H1 (cell line): ENCODE measurements at regions of chr17 and their contacts with region 1.

Region 1: DNA sequence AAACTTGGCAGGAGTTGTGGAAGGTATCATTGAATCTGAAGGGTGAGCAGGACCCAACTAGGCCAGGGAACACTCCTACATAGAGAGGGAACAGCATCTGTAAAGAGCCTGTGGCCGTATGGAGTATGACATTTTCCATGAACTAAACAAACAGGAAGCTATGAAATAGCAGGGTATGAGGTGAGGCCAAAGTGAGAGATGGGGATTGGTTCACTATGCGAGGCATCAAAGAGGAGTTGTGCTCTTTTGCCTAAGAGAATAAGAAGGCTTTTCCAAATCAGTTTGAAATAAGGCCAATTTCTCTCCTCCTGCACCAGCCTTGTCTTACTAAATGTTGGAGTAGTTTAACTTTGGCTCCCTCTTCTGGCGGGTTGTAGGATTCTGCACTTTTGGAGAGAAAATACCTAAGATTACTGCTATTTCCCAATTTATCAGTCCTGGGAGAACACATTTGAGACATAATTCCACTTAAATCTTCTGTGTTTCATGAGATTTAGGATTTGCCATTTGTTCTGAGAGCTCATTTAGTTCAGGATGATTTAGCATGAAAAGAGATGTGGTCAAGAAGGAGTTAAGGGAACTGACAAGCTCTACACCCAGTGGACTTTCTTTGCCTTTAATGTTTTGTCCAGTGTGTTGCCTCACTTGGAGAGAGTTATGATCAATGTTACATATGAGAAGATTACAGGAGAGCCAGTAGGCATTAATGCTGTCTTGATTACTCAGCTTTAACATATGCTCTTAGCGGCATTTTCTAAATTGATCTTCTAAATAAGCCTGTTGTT is 55.4 kb downstream of the TNRC6C start:
- DNase-seq: peak in 1 of 2 experiments; percentile 57
- H3K4me3 ChIP-seq: no peak overlapping the region
- H3K27ac ChIP-seq: no peak overlapping the region
- H3K4me1 ChIP-seq: 0 out of 7 replicates have a peak, but pooled peaks cover 0 to 1% (median 0%) of the 10 kb centered on the region in 4 experiments
- H3K27me3 ChIP-seq: no peaks in the 10 kb centered on the region
- CTCF ChIP-seq: peak in 2 of 3 experiments; percentile 71 to 74; a peak in 3 of 4 replicates
- EP300 ChIP-seq: no peak
- POLR2A ChIP-seq: no peak
- RAD21 ChIP-seq: peak; percentile 86 to 89

Region 2: GRCh38 chr17:77887464-77888241 is 126.2 kb before region 1 on chr17:
- CTCF ChIA-PET with region 1: interaction called, 147 read pairs
- POLR2A ChIA-PET with region 1: no interaction called
- DNase-seq: no peak
- H3K4me3 ChIP-seq: peak overlapping the region; percentile 42 to 63 (median 55); a peak in 7 of 8 replicates
- H3K27ac ChIP-seq: no peak overlapping the region
- H3K4me1 ChIP-seq: peaks cover 0 to 18% (median 12%) of the 10 kb centered on the region in 4 experiments; a peak in 6 of 7 replicates
- H3K27me3 ChIP-seq: peaks cover 7 to 30% (median 22%) of the 10 kb centered on the region in 4 experiments; a peak in 6 of 7 replicates
- CTCF ChIP-seq: no peak
- EP300 ChIP-seq: no peak
- POLR2A ChIP-seq: no peak
- RAD21 ChIP-seq: no peak

Region 3: GRCh38 chr17:77914385-77915254 is 99.3 kb before region 1 on chr17:
- CTCF ChIA-PET with region 1: interaction called, 42 read pairs
- POLR2A ChIA-PET with region 1: no interaction called
- DNase-seq: no peak
- H3K4me3 ChIP-seq: no peak overlapping the region
- H3K27ac ChIP-seq: no peak overlapping the region
- H3K4me1 ChIP-seq: peaks cover 0 to 3% (median 0%) of the 10 kb centered on the region in 4 experiments; a peak in 1 of 7 replicates
- H3K27me3 ChIP-seq: no peaks in the 10 kb centered on the region; a peak in 1 of 7 replicates
- CTCF ChIP-seq: peak; percentile 70 to 80 (median 75)
- EP300 ChIP-seq: no peak
- POLR2A ChIP-seq: no peak
- RAD21 ChIP-seq: peak; percentile 79 to 84

Region 4: DNA sequence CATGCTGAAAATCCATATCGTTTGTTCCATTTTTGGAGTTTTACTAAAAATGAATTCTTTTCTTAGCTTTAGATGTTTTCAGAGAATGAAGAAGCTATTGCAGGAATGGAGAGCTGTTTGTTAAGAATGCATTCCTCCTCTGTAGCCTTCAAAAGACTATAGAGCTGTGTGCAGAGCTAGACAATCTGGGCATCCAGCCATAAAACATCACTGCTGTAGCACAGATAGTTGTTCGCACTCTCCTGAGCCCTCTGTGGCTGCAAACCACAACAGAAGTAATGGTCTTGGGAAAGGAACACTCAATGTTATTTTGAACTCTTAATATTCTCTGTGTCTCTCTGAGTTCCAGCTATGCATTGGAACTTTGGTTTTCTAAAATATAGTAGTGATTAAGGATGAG is 50.4 kb before region 1 on chr17:
- CTCF ChIA-PET with region 1: interaction called, 10 read pairs
- POLR2A ChIA-PET with region 1: interaction called, 9 read pairs
- DNase-seq: no peak
- H3K4me3 ChIP-seq: no peak overlapping the region
- H3K27ac ChIP-seq: no peak overlapping the region
- H3K4me1 ChIP-seq: peaks cover 0 to 3% (median under 1%) of the 10 kb centered on the region in 4 experiments; a peak in 3 of 7 replicates
- H3K27me3 ChIP-seq: peaks cover 0 to 6% (median 2%) of the 10 kb centered on the region in 4 experiments; a peak in 4 of 7 replicates
- CTCF ChIP-seq: no peak
- EP300 ChIP-seq: no peak
- POLR2A ChIP-seq: no peak
- RAD21 ChIP-seq: no peak

Region 5: GRCh38 chr17:77990301-77990700 is 23.6 kb before region 1 on chr17:
- CTCF ChIA-PET with region 1: interaction called, 13 read pairs
- POLR2A ChIA-PET with region 1: no interaction called
- DNase-seq: no peak
- H3K4me3 ChIP-seq: no peak overlapping the region
- H3K27ac ChIP-seq: no peak overlapping the region
- H3K4me1 ChIP-seq: peaks cover 0 to 3% (median 0%) of the 10 kb centered on the region in 4 experiments; a peak in 3 of 7 replicates
- H3K27me3 ChIP-seq: no peaks in the 10 kb centered on the region
- CTCF ChIP-seq: no peak
- EP300 ChIP-seq: no peak
- POLR2A ChIP-seq: no peak
- RAD21 ChIP-seq: no peak

Region 6: GRCh38 chr17:78101112-78101511 is 87.2 kb after region 1 on chr17:
- CTCF ChIA-PET with region 1: no interaction called
- POLR2A ChIA-PET with region 1: no interaction called
- DNase-seq: no peak
- H3K4me3 ChIP-seq: no peak overlapping the region
- H3K27ac ChIP-seq: no peak overlapping the region
- H3K4me1 ChIP-seq: no peaks in the 10 kb centered on the region
- H3K27me3 ChIP-seq: no peaks in the 10 kb centered on the region
- CTCF ChIP-seq: no peak
- EP300 ChIP-seq: no peak
- POLR2A ChIP-seq: no peak
- RAD21 ChIP-seq: no peak

Region 7: DNA sequence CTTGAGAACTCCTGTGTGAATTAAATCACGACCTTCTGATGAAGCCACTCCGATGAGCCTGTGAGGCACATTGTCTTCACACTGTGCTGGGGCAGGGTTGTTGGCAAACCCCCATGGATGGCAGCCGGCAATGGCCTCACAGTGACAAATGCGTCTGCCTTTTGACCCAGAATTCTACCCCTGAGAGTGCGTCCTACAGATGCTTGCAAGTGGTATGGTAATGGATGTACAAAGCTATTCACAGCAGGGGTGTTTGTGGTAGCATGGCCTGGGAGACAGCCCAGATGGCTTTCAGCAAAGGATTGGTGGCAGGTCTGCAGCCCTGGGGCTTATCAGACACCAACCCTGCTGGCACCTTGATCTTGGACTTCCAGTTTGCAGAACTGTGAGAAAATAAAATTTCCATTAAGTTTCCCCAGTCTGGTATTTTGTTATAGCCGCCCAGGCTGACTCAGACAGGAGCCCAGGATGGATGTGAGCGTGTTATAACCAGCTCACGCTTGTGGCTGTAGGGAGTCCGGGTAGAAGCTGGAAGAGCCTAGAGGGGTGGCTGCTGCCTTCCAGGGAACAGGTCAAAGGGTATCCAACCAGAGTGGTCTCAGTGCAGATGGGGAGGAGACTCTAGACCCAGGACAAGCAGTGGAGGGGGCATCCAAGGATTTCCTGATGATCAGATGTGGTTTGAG is 183.4 kb after region 1 on chr17:
- CTCF ChIA-PET with region 1: no interaction called
- POLR2A ChIA-PET with region 1: no interaction called
- DNase-seq: no peak
- H3K4me3 ChIP-seq: no peak overlapping the region
- H3K27ac ChIP-seq: peak overlapping the region; percentile 29; the same call in 1 of the 2 replicates
- H3K4me1 ChIP-seq: peaks cover 0 to 11% (median 4%) of the 10 kb centered on the region in 4 experiments; a peak in 5 of 7 replicates
- H3K27me3 ChIP-seq: no peaks in the 10 kb centered on the region
- CTCF ChIP-seq: no peak
- EP300 ChIP-seq: no peak
- POLR2A ChIP-seq: no peak
- RAD21 ChIP-seq: no peak